H1 (cell line): ENCODE measurements at regions of chr14 and their contacts with region 1.

Region 1: GRCh38 chr14:99415496-99416281 is 65.0 kb downstream of the SETD3 start:
- DNase-seq: no peak
- H3K4me3 ChIP-seq: no peak overlapping the region
- H3K27ac ChIP-seq: no peak overlapping the region
- H3K4me1 ChIP-seq: peaks cover 6 to 31% (median 18%) of the 10 kb centered on the region in 4 experiments
- H3K27me3 ChIP-seq: no peaks in the 10 kb centered on the region
- CTCF ChIP-seq: peak in 2 of 3 experiments; percentile 82 to 83; a peak in 3 of 4 replicates
- EP300 ChIP-seq: no peak
- POLR2A ChIP-seq: no peak
- RAD21 ChIP-seq: peak; percentile 95 to 97

Region 2: GRCh38 chr14:99401621-99402284 is 13.9 kb before region 1 on chr14:
- CTCF ChIA-PET with region 1: interaction called, 447 read pairs
- POLR2A ChIA-PET with region 1: interaction called, 9 read pairs
- DNase-seq: peak in 1 of 2 experiments; percentile 44
- H3K4me3 ChIP-seq: no peak overlapping the region
- H3K27ac ChIP-seq: no peak overlapping the region
- H3K4me1 ChIP-seq: peaks cover 0 to 2% (median 0%) of the 10 kb centered on the region in 4 experiments; a peak in 1 of 7 replicates
- H3K27me3 ChIP-seq: no peaks in the 10 kb centered on the region
- CTCF ChIP-seq: no peak
- EP300 ChIP-seq: no peak
- POLR2A ChIP-seq: no peak
- RAD21 ChIP-seq: no peak